Breast epithelium (tissue), 4 donors: ENCODE measurements at regions of chr11 and their contacts with region 1.

Region 1: GRCh38 chr11:109870297-109870696 is 222.9 kb upstream of the ZC3H12C start:
- DNase-seq: no peak
- H3K4me3 ChIP-seq: no peak overlapping the region
- H3K27ac ChIP-seq: no peak overlapping the region
- H3K4me1 ChIP-seq: no peaks in the 10 kb centered on the region
- H3K27me3 ChIP-seq: no peaks in the 10 kb centered on the region
- CTCF ChIP-seq: no peak
- POLR2A ChIP-seq: no peak

Region 2: DNA sequence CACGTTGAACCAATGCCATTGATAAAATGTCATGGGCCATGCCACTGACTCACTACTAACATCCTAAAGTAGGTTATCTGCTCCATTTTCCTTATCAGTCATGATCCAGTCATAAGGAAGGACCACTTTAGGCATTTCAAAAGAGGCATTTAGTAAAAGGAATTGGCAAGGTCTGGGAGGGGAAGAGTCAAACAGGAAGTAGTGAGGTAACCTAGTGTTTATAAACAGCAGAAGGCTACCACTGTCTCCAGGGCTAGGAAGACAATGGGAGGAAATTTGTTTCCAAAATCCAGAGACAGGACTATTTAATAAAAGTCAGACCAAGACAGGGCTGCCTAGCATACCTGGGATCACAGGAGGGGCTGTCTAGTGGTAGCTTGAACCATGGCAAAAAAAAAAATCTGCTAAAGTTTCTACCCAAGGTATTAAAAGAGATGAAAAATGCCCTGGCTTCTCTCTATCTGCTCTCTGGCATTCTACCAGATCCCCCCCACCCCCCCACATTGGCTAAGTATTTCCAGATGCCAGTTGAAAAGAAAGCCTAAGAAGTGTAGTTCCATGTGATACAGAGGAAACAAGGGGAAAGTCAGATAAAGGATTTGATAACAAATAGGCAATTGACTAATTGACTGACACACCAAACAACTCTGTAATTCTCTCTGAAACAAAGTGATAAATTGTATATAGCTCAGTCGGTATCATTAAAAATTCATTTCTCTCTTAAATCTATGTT is 498.7 kb before region 1 on chr11:
- intact Hi-C with region 1: no loop called
- DNase-seq: no peak
- H3K4me3 ChIP-seq: no peak overlapping the region
- H3K27ac ChIP-seq: no peak overlapping the region
- H3K4me1 ChIP-seq: no peaks in the 10 kb centered on the region
- H3K27me3 ChIP-seq: no peaks in the 10 kb centered on the region
- CTCF ChIP-seq: no peak
- POLR2A ChIP-seq: no peak

Region 3: GRCh38 chr11:109808569-109808968 is 61.7 kb before region 1 on chr11:
- intact Hi-C with region 1: no loop called
- DNase-seq: no peak
- H3K4me3 ChIP-seq: no peak overlapping the region
- H3K27ac ChIP-seq: no peak overlapping the region
- H3K4me1 ChIP-seq: no peaks in the 10 kb centered on the region
- H3K27me3 ChIP-seq: no peaks in the 10 kb centered on the region
- CTCF ChIP-seq: no peak
- POLR2A ChIP-seq: no peak

Region 4: DNA sequence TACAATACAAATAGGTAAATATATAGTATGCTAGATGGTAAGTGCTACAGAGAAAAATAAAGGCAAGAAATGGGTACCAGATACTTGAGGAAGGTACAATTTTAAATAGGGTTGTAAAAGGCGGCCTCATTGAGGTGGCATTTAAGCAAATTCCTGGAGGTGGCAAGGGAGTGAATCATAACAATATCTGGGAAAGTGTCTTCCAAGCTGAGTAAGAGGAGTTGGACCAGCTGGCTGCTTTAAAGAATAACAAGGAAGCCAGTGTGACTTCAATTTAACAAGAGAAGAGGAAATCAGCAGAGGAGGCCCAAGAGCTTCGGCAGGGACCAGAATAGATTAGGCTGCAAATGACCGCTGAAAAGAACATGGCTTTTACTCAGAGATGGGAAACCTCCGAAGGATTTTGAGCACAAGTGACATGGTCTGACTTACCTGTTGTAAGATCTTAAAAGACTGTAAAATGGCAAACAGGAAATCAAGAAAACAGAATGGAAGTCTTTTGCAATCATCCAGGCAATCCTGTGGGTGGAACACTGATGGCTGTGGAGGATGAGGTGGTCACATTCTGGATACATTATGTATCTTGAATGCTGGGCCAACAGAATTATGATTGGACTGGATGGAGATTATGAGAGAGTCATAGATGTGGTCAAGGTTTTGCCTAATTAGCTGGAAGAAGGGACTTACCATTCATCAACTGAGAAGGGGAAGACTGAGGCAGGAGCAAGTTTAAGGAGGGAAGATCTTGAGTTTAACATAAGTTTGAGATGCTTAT is 348.9 kb after region 1 on chr11:
- intact Hi-C with region 1: loop called (anchors 10 kb)
- DNase-seq: no peak
- H3K4me3 ChIP-seq: no peak overlapping the region
- H3K27ac ChIP-seq: no peak overlapping the region
- H3K4me1 ChIP-seq: no peaks in the 10 kb centered on the region
- H3K27me3 ChIP-seq: no peaks in the 10 kb centered on the region
- CTCF ChIP-seq: no peak
- POLR2A ChIP-seq: no peak

Region 5: GRCh38 chr11:110530900-110531741 is 660.8 kb after region 1 on chr11:
- intact Hi-C with region 1: loop called (anchors 10 kb)
- DNase-seq: no peak
- H3K4me3 ChIP-seq: no peak overlapping the region
- H3K27ac ChIP-seq: no peak overlapping the region
- H3K4me1 ChIP-seq: no peaks in the 10 kb centered on the region
- H3K27me3 ChIP-seq: no peaks in the 10 kb centered on the region
- CTCF ChIP-seq: no peak
- POLR2A ChIP-seq: no peak